Activated CD8-positive, alpha-beta T cell treated with anti-CD3 and anti-CD28 coated beads for 36 hours (primary cell): ENCODE measurements at regions of chr6 and their contacts with region 1.

Region 1: GRCh38 chr6:16761471-16762267 is 409 bp upstream of the ATXN1 start:
- DNase-seq: peak; percentile 91
- ATAC-seq: peak; percentile 64
- H3K4me3 Mint-ChIP-seq: peak overlapping the region; percentile 98
- H3K27ac Mint-ChIP-seq: peak overlapping the region; percentile 99
- H3K4me1 Mint-ChIP-seq: peaks cover 58% of the 10 kb centered on the region
- H3K27me3 Mint-ChIP-seq: no peaks in the 10 kb centered on the region
- CTCF ChIP-seq: no peak

Region 2: DNA sequence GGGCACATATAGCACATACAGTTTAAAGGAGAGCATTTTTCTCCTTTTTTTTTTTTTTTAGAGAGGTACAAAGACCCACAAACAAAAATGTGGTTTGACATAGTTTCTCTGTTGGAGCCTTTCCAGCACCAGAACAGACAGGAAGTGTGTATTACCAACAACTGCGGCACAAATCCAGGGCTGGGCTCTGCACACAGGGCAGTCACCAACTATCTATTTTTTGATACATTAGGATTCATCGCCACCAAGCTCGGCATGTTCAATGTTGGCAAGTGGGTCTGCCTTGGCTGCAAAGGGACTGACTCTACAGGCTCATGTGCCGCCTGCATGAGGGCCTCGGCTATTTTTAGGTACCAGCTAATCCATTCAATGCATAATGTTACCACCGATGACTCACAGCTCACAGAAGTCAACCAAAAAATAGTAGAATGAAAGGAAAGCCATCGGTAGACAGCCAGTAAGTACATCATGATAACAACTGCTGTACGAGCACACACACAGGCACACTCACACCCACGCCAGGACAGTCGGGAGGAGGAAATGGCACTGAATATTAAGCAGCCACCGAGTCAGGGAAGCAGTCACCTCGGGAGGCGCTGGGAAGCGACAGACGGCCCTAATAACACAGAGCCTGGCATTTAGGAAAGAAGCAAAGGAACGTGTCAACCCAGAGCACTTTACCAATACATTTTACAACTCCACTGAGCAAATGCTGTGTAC is 441.7 kb before region 1 on chr6:
- CTCF ChIA-PET with region 1: interaction called, 18 read pairs
- POLR2A ChIA-PET with region 1: interaction called, 3 read pairs
- intact Hi-C with region 1: no loop called
- DNase-seq: peak; percentile 82
- ATAC-seq: peak; percentile 56
- H3K4me3 Mint-ChIP-seq: peak overlapping the region; percentile 61
- H3K27ac Mint-ChIP-seq: peak overlapping the region; percentile 94
- H3K4me1 Mint-ChIP-seq: peaks cover 78% of the 10 kb centered on the region
- H3K27me3 Mint-ChIP-seq: no peaks in the 10 kb centered on the region
- CTCF ChIP-seq: no peak

Region 3: DNA sequence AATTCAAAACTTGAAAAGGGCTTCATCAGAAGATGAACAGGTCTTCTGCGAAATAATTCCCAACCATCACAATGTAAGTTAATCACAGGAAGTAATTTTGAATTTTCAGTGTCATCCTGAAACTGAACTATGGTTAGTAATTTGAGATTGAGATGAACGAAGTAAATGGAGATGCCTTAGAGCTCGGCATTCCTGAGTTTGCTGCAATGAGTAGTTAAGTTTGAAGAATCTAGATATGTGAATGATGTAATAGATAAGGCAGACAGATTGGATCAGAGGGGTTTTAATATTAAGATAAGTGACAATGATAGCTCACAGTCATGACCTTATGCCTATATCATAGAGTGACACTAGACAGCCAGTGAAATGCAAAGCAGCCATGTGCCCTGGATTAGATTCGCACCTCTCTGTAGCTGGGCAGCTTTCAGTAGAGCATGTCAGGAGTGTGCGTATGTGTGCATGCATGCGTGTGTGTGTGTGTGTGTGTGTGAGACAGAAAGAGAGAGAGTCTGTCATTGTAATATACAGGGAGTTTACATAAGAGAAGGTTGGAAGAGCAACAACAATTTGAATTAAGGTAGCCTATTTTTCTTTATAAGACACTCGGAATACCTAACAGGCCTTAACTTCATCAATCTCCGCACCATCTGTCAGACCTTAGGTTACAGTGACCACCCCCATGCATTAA is 290.3 kb before region 1 on chr6:
- CTCF ChIA-PET with region 1: interaction called, 8 read pairs
- POLR2A ChIA-PET with region 1: interaction called, 5 read pairs
- intact Hi-C with region 1: loop called (anchors 2 kb)
- DNase-seq: peak; percentile 55
- ATAC-seq: peak; percentile 51
- H3K4me3 Mint-ChIP-seq: no peak overlapping the region
- H3K27ac Mint-ChIP-seq: peak overlapping the region; percentile 86
- H3K4me1 Mint-ChIP-seq: peaks cover 78% of the 10 kb centered on the region
- H3K27me3 Mint-ChIP-seq: no peaks in the 10 kb centered on the region
- CTCF ChIP-seq: no peak

Region 4: DNA sequence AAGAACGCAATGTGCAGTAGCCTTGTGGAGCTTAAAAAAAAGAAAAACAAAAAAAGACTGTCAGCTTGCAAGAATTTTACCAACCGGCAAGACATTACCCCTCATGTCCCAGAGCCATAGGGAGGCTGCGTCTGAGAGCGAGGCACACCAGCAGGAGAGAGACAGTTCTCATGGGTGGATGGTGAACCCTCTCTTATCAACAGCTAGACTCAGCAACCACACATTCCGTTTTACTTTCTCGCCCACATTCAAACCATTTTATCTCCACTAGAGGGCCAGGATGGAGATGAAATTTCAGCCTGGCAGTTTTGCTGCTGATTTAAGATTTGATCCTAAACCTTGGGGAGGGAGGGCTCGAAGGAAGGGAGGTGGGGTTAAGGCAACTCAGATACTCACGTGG is 247.4 kb before region 1 on chr6:
- CTCF ChIA-PET with region 1: interaction called, 68 read pairs
- POLR2A ChIA-PET with region 1: interaction called, 5 read pairs
- intact Hi-C with region 1: loop called (anchors 5 kb)
- DNase-seq: peak; percentile 48
- ATAC-seq: peak; percentile 49
- H3K4me3 Mint-ChIP-seq: no peak overlapping the region
- H3K27ac Mint-ChIP-seq: peak overlapping the region; percentile 8
- H3K4me1 Mint-ChIP-seq: peaks cover 74% of the 10 kb centered on the region
- H3K27me3 Mint-ChIP-seq: no peaks in the 10 kb centered on the region
- CTCF ChIP-seq: peak; percentile 61

Region 5: GRCh38 chr6:16657768-16658167 is 103.9 kb before region 1 on chr6:
- CTCF ChIA-PET with region 1: interaction called, 31 read pairs
- POLR2A ChIA-PET with region 1: interaction called, 41 read pairs
- intact Hi-C with region 1: loop called (anchors 2 kb)
- DNase-seq: peak; percentile 12
- ATAC-seq: peak; percentile 60
- H3K4me3 Mint-ChIP-seq: peak overlapping the region; percentile 42
- H3K27ac Mint-ChIP-seq: peak overlapping the region; percentile 88
- H3K4me1 Mint-ChIP-seq: peaks cover 78% of the 10 kb centered on the region
- H3K27me3 Mint-ChIP-seq: no peaks in the 10 kb centered on the region
- CTCF ChIP-seq: no peak

Region 6: DNA sequence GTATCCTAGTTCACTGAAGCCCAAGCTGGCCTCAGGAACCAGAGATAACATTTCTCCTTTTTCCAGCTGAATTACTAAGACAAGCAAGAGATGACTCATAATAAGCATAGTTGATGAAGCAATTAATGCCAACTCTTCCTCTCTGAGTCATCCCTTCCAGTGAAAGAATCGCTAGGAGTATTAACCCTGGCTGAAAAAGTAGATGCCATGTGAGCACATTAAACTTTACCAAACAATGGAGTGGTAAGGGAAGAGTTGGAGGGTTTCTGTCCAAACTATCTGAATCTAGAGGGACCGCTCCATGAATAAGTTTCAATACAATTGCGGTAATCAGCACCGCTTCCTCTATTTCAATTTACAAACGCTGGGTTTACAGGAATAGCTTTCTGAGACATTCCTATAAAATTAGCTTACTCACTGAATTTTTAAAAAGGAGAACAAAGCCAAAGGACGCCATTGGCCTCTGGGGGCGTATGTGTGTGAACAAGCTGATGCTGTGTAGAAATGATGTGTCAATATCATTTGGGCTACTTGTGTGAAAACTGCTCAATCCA is 48.7 kb before region 1 on chr6:
- CTCF ChIA-PET with region 1: interaction called, 7 read pairs
- POLR2A ChIA-PET with region 1: interaction called, 8 read pairs
- intact Hi-C with region 1: loop called (anchors 5 kb)
- DNase-seq: peak; percentile 47
- ATAC-seq: peak; percentile 37
- H3K4me3 Mint-ChIP-seq: peak overlapping the region; percentile 68
- H3K27ac Mint-ChIP-seq: peak overlapping the region; percentile 92
- H3K4me1 Mint-ChIP-seq: peaks cover 62% of the 10 kb centered on the region
- H3K27me3 Mint-ChIP-seq: no peaks in the 10 kb centered on the region
- CTCF ChIP-seq: peak; percentile 44

Region 7: DNA sequence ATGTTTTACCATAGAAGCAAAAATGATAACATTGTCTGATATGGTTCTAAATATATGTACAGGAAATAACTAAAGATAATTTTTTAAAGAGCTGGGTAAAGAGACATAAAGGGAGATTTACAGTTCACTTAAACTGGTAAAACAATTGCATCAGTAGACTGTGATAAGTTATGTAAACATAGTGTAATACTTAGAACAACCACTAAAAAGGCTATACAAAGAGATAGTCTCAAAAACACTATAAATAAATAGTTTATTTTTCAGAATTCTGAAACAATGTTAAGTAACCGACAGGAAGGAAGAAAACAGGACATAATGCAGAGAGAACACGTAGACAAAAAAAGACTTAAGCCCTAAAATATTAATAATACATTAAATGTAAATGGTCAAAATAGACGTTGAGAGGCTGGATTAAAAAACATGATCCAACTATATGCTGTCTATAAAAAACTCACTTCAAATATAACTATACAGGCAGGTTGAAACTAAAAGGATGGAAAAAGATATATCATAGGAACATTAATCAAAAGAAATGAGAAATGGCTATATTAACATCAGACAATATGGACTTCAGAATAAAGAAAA is 32.3 kb after region 1 on chr6:
- CTCF ChIA-PET with region 1: no interaction called
- POLR2A ChIA-PET with region 1: no interaction called
- intact Hi-C with region 1: no loop called
- DNase-seq: no peak
- ATAC-seq: no peak
- H3K4me3 Mint-ChIP-seq: no peak overlapping the region
- H3K27ac Mint-ChIP-seq: no peak overlapping the region
- H3K4me1 Mint-ChIP-seq: no peaks in the 10 kb centered on the region
- H3K27me3 Mint-ChIP-seq: no peaks in the 10 kb centered on the region
- CTCF ChIP-seq: no peak

Region 8: DNA sequence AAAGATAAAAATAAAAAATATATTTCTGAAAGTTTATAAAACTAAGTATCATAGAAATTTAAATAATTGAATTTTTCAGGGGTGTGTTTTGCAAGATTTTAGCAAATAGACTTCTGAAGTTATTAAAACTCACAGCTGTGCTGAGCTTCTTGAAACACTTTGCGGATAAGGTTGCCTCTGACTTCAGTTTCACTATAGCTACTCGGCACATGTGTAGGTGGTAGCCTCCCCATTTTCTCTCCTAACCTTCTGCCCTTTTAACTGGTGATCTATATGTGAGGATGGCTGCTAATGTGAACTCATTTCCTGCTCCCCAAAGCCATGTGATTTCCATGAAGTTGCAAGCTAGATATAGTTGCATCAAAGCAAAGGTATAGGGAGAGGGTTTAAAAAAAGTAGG is 210.9 kb after region 1 on chr6:
- CTCF ChIA-PET with region 1: no interaction called
- POLR2A ChIA-PET with region 1: no interaction called
- intact Hi-C with region 1: no loop called
- DNase-seq: peak; percentile 34
- ATAC-seq: peak; percentile 65
- H3K4me3 Mint-ChIP-seq: no peak overlapping the region
- H3K27ac Mint-ChIP-seq: no peak overlapping the region
- H3K4me1 Mint-ChIP-seq: peaks cover 5% of the 10 kb centered on the region
- H3K27me3 Mint-ChIP-seq: peaks cover 39% of the 10 kb centered on the region
- CTCF ChIP-seq: no peak

Region 9: GRCh38 chr6:17149571-17149970 is 387.9 kb after region 1 on chr6:
- CTCF ChIA-PET with region 1: no interaction called
- POLR2A ChIA-PET with region 1: no interaction called
- intact Hi-C with region 1: no loop called
- DNase-seq: no peak
- ATAC-seq: no peak
- H3K4me3 Mint-ChIP-seq: no peak overlapping the region
- H3K27ac Mint-ChIP-seq: no peak overlapping the region
- H3K4me1 Mint-ChIP-seq: no peaks in the 10 kb centered on the region
- H3K27me3 Mint-ChIP-seq: peaks cover 4% of the 10 kb centered on the region
- CTCF ChIP-seq: no peak